ENCODE measurements at regions of chr7 and their contacts with region 1.

Region 1: DNA sequence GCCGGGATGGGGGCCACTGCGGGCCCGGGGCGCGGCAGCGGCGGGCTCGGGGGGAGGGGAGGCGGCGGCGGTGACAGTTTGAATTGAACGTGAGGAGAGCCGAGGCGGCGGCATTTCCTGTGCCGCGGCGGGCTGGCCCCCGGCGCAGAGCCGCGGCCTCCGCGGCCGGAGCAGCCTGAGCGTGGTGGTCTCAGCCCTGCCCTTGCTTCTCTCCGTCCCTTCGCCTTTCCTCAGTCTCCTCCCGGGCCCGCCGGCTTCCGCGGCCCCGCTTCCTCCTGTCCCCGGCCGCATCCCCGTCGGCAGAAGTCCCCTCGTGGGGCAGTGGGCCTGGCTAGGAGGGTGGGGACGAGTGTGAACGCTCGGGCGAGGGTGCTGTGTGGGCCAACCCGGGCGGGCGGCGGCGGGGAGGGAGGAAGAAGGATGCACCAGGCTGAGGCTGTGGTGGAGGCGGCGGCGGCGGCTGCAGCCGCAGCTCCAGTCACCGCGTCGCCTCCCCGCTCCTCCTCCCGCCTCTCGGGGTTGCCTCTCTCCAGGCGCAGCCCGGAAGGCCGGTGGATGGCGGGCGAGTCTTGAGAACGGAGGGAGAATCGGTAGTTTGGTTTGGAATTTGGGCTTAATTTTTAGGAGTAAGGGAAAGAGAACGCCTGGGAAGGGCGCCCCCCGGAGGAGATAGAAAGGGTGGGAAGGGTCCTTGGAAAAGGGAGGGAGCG is 690 bp downstream of the SEPTIN7 start:
- DNase-seq: peak; percentile 22
- H3K4me3 ChIP-seq: peak overlapping the region; percentile 84 to 97 (median 90)
- H3K27ac ChIP-seq: peak overlapping the region; percentile 97 to 100 (median 98)
- H3K4me1 ChIP-seq: peaks cover 7 to 60% (median 21%) of the 10 kb centered on the region in 3 donors
- H3K27me3 ChIP-seq: no peaks in the 10 kb centered on the region
- CTCF ChIP-seq: peak; percentile 36 to 53 (median 38)
- POLR2A ChIP-seq: no peak

Region 2: DNA sequence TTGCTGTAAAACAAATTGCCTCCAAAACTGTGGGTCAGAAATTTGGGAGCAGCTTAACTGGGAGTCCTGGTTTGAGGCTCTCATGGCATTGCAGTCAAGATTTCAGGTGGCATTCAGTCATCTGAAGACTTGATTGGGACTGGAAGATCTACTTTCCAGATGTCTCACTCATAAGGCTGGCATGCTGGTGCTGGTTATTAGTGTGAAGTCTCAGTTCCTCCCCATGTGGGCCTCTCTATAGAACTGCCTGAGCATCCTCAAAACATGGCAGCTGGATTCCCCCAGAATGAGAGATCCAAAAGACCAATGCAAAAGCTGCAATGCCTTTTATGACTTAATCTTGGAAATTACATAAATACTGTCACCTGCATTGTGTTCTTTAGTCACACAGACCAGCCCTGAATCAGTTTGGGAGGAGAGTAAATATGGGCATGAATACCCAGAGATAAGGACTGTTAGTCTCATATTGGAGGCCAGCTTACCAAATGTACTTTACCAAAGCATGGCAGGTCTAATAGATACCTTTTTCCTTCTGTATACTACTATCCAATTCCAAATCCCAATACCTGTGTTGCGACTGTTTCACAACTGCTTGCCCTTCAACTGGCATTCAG is 100.2 kb before region 1 on chr7:
- intact Hi-C with region 1: loop called (anchors 10 kb)
- DNase-seq: no peak
- H3K4me3 ChIP-seq: no peak overlapping the region
- H3K27ac ChIP-seq: peak overlapping the region in 1 of 4 donors; percentile 49
- H3K4me1 ChIP-seq: peaks cover 5 to 26% (median 6%) of the 10 kb centered on the region in 3 donors
- H3K27me3 ChIP-seq: no peaks in the 10 kb centered on the region
- CTCF ChIP-seq: no peak
- POLR2A ChIP-seq: no peak